Natural killer cell (primary cell): ENCODE measurements at regions of chr19 and their contacts with region 1.

Region 1: GRCh38 chr19:21767065-21767800 is at the start of gene ZNF100:
- DNase-seq: peak; percentile 77 to 93
- ATAC-seq: peak; percentile 96 to 97 (median 97)
- H3K4me3 ChIP-seq: peak within 1 kb of the TSS; percentile 87
- H3K4me3 Mint-ChIP-seq: peak within 1 kb of the TSS; percentile 96
- H3K27ac ChIP-seq: peak within 1 kb of the TSS; percentile 92
- H3K27ac Mint-ChIP-seq: peak within 1 kb of the TSS; percentile 90 to 94
- H3K4me1 ChIP-seq: peaks cover 6% of the 10 kb centered on the region
- H3K4me1 Mint-ChIP-seq: peaks cover 28 to 30% of the 10 kb centered on the region in 2 donors
- H3K27me3 ChIP-seq: no peaks in the 10 kb centered on the region
- H3K27me3 Mint-ChIP-seq: no peaks in the 10 kb centered on the region
- CTCF ChIP-seq: no peak
- total RNA-seq, gene ZNF100: 7.9 to 16.9 (median 9.5) TPM

Region 2: DNA sequence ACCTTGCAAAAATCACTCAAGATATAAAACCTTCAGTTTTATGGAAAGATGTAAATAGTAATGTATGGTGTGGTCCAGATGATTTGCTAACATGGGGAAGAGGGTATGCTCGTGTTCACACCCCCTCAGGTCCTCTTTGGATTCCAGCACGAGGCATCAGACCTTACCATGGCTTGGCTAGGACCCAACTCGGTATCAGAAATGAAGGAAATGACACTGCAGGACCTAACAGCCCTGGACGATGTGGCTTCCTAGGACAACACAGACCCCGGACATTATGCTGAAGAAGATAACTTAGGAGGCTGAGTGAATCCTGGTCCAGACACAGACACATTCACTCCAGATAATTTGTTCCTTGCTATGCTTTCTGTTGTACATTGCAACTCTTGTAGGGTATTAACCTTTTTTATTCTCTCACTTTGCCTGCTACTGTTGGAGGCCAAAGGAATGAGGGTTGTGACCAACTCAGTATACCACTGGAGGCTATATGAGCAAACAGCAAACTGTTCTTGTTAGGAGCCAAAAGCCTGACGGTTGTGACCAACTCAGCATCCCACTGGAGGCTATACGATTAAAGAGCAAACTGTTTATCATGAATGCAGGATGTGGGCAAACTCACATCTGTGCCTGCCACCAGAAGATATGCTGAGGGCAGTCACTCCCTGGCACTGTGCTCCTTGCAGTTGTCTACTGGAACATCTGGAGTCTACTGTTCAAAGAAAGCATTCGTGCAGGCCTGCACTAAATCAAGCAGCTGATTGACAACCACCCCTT is 140.1 kb before region 1 on chr19:
- intact Hi-C with region 1: no loop called
- DNase-seq: no peak
- ATAC-seq: no peak
- H3K4me3 ChIP-seq: no peak overlapping the region
- H3K4me3 Mint-ChIP-seq: no peak overlapping the region
- H3K27ac ChIP-seq: no peak overlapping the region
- H3K27ac Mint-ChIP-seq: no peak overlapping the region
- H3K4me1 ChIP-seq: no peaks in the 10 kb centered on the region
- H3K4me1 Mint-ChIP-seq: no peaks in the 10 kb centered on the region
- H3K27me3 ChIP-seq: no peaks in the 10 kb centered on the region
- H3K27me3 Mint-ChIP-seq: no peaks in the 10 kb centered on the region
- CTCF ChIP-seq: no peak

Region 3: GRCh38 chr19:21812450-21812849 is 45.2 kb after region 1 on chr19:
- intact Hi-C with region 1: no loop called
- DNase-seq: no peak
- ATAC-seq: no peak
- H3K4me3 ChIP-seq: no peak overlapping the region
- H3K4me3 Mint-ChIP-seq: no peak overlapping the region
- H3K27ac ChIP-seq: no peak overlapping the region
- H3K27ac Mint-ChIP-seq: no peak overlapping the region
- H3K4me1 ChIP-seq: no peaks in the 10 kb centered on the region
- H3K4me1 Mint-ChIP-seq: no peaks in the 10 kb centered on the region
- H3K27me3 ChIP-seq: no peaks in the 10 kb centered on the region
- H3K27me3 Mint-ChIP-seq: no peaks in the 10 kb centered on the region
- CTCF ChIP-seq: no peak

Region 4: GRCh38 chr19:21851596-21852345 is 84.5 kb after region 1 on chr19:
- intact Hi-C with region 1: loop called (anchors 1 kb)
- DNase-seq: peak; percentile 87 to 93
- ATAC-seq: peak; percentile 97 to 99 (median 99)
- H3K4me3 ChIP-seq: peak overlapping the region; percentile 98
- H3K4me3 Mint-ChIP-seq: peak overlapping the region; percentile 94
- H3K27ac ChIP-seq: peak overlapping the region; percentile 79
- H3K27ac Mint-ChIP-seq: peak overlapping the region; percentile 74 to 87
- H3K4me1 ChIP-seq: peaks cover 15% of the 10 kb centered on the region
- H3K4me1 Mint-ChIP-seq: peaks cover 13% of the 10 kb centered on the region in 2 donors
- H3K27me3 ChIP-seq: no peaks in the 10 kb centered on the region
- H3K27me3 Mint-ChIP-seq: peaks cover 0 to 5% of the 10 kb centered on the region in 2 donors
- CTCF ChIP-seq: no peak